Activated T-helper 1 cell treated with anti-CD3 and anti-CD28 coated beads, Interleukin-12 subunit alpha, Interleukin-12 subunit beta, Interleukin-2, Interleukin-4 antibody, amounts not matched to agents 30 ng/mL and 10 ng/mL and 1 ng/mL, durations not matched to agents 14 hours and 24 hours and 36 hours (primary cell): ENCODE measurements at regions of chr14 and their contacts with region 1.

Region 1: DNA sequence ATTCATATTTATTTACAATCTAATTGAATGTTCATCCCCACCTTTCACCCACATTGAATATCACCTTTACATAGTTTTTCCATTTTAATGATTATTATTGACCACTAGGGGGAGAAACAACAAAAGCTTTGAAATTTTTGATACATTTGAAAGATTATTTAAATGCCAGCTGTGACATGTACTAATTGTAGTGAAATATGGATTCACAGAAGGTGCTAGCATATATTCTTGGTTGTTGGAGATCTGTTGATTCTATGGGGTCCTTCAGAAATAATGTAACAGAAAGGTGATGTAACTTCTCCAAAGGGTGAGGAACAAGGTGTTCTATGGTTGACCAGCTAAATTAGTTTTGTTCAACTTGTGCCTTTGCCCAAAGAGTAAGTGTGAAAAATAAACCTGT is 22.4 kb upstream of the GPR33 start:
- DNase-seq: no peak
- H3K4me3 Mint-ChIP-seq: no peak overlapping the region
- H3K27ac Mint-ChIP-seq: no peak overlapping the region
- H3K4me1 Mint-ChIP-seq: no peaks in the 10 kb centered on the region
- H3K27me3 Mint-ChIP-seq: peaks cover 4% of the 10 kb centered on the region

Region 2: DNA sequence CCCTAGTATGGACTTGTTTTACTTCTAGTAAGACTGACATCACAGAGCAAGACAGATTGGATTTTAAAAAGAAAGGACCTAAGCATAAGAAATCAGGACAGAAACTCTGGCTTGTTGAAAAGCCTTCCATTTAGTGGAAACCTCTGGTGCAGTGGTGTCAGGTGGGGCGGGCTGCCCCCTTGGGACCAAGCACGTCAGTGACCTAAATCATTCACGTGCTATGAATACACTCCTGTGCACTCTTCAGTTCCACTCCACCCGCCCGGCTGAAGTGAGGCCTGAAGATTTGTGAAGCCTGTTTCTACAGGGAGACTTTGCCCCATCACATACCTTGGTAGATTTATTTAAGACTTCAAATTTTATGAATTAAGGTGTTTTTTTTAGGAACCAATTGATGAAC is 425.8 kb before region 1 on chr14:
- intact Hi-C with region 1: no loop called
- DNase-seq: no peak
- H3K4me3 Mint-ChIP-seq: no peak overlapping the region
- H3K27ac Mint-ChIP-seq: no peak overlapping the region
- H3K4me1 Mint-ChIP-seq: no peaks in the 10 kb centered on the region
- H3K27me3 Mint-ChIP-seq: no peaks in the 10 kb centered on the region

Region 3: DNA sequence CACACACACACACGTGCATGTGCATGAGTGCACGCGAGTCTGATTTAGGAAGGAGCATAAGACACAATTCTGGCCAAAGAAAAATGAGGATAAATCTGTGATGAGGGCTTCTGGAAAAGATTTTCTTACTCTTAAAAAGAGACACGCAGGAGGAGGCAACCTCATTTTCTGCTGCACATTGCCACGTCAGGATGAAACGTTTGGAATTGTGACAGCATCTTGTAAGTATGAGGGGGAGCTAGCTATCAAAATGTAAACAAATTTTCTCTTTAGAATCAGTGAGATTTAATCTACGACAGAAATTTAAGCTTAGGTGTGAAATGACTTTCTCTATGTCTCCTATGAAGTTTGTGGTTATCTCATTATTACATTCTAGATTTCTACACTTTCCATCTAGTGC is 19.9 kb after region 1 on chr14:
- intact Hi-C with region 1: no loop called
- DNase-seq: no peak
- H3K4me3 Mint-ChIP-seq: no peak overlapping the region
- H3K27ac Mint-ChIP-seq: no peak overlapping the region
- H3K4me1 Mint-ChIP-seq: no peaks in the 10 kb centered on the region
- H3K27me3 Mint-ChIP-seq: no peaks in the 10 kb centered on the region

Region 4: DNA sequence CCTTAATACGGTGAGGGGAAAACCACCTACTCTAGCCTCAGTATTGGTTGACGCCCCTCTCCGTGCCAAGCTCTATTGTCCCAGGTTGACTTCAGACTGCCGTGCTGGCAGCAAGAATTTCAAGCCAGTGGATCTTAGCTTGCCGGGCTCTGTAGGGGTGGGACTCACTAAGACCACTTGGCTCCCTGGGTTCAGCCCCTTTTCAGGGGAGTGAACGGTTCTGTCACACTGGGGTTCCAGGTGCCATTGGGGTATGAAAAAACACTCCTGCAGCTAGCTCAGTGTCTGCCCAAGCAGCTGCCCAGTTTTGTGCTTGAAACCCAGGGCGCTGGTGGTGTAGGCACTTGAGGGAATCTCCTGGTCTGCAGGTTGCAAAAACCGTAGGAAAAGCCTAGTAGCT is 158.1 kb after region 1 on chr14:
- intact Hi-C with region 1: no loop called
- DNase-seq: no peak
- H3K4me3 Mint-ChIP-seq: no peak overlapping the region
- H3K27ac Mint-ChIP-seq: no peak overlapping the region
- H3K4me1 Mint-ChIP-seq: no peaks in the 10 kb centered on the region
- H3K27me3 Mint-ChIP-seq: no peaks in the 10 kb centered on the region

Region 5: DNA sequence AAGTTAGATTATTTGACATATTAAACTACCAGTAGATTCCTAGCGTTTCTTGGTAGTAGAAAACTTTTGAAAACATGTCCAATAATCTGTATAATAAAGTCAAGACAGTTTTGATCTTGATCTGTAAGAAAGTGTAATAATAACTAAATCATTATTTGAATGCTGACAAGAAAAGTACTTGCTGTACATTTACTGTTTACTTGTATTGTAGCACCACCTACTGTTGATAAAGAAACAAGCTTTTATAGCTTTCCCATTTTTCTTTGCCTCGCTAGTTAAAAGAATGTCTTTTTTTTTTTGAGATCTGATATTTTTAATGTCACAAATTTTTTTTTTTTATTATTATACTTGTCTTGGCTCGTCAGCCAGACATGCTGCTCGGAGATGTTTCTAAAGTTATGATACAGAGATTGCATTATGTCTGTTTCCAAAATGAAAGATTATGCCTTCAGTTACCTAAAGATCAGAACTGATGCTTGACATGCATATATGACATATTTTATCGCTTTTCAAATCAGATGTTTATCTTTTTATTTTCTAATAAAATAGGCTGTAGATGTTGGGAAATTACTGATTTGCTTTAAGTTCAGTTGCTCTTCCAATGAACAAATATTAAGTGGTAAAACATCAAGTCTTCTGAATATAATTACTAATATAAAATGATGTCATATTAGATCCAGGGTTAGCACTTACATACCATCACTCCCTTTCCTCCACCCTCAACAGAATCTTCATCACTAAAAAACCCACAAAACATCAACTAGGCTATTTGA is 959.4 kb after region 1 on chr14:
- intact Hi-C with region 1: loop called (anchors 10 kb)
- DNase-seq: no peak
- H3K4me3 Mint-ChIP-seq: no peak overlapping the region
- H3K27ac Mint-ChIP-seq: no peak overlapping the region
- H3K4me1 Mint-ChIP-seq: no peaks in the 10 kb centered on the region
- H3K27me3 Mint-ChIP-seq: peaks cover 6% of the 10 kb centered on the region

Region 6: DNA sequence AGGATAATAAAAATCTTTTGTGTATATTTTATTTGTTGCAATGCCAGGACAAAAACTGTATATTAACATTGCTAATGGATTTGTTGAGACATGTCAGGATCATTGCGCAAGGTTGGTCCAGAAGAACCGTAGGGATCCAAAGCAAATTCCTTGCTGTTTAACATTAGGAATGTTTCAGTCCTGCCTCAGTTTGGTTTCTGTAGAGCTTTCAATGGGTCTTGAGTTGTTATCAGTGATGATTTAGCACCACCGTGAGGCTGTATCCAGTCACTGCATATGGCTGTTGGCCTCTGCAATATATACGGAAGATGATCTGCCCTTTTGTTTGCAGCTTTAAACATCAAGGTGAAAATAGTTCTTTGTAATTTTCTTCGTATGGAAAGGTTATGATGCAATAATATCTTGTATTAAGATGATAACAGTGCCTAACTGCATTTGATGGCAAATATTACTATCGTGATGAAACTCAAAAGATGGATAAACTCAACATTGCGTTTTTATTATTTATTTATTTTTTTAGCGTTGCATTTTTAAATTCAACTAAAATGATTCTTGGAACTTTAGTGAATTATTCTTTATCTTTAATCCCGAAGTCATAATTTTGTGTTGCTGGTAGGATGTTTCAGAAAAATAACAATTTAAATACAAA is 1050.1 kb after region 1 on chr14:
- intact Hi-C with region 1: loop called (anchors 1 kb)
- DNase-seq: peak; percentile 5
- H3K4me3 Mint-ChIP-seq: no peak overlapping the region
- H3K27ac Mint-ChIP-seq: no peak overlapping the region
- H3K4me1 Mint-ChIP-seq: peaks cover 17% of the 10 kb centered on the region
- H3K27me3 Mint-ChIP-seq: no peaks in the 10 kb centered on the region